Naive thymus-derived CD4-positive, alpha-beta T cell (primary cell): ENCODE measurements at regions of chr1 and their contacts with region 1.

Region 1: DNA sequence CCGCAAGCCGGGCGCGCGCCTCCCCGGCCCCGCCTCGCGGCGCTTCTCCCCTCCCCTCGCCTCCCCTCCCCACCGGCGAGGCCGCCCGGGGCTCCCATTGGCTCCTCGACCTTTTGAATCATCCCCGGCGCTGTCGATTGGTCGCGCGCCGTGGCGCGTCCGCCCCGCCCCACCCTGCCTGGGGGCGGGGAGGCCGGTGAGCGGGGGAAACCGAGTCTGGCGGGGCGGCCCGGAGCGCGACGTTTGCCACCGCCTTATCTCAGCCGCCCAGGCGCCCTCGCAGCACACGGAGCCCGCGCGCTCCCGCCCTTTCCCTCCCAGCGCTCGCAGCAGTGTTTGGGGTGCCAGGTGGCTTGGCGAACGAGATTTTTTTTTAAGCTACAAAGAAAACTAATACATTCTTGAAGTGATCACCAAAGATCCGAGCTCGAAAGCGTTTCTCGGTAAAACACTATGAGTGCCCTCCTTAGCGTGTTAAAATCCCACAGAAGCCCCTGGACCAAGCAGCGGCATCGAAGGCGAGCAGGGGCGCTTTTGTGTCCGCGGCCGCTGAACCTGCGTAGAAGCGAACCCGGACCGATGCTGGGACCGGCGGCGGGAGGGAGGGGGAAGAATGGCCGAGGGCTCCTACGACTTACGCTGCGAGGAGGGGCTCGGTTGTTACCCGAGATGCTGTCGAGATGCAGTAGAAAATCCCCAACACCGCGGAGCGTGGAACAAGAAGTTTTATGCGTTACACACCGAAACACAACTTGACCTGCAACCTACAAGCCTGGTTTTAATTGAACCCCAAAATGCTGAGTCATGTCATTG is 436 bp upstream of the LBR start:
- DNase-seq: peak; percentile 81 to 94 (median 91)
- ATAC-seq: peak; percentile 95
- H3K4me3 ChIP-seq: peak overlapping the region; percentile 71
- H3K4me3 Mint-ChIP-seq: peak overlapping the region; percentile 88 to 99 (median 91)
- H3K27ac ChIP-seq: peak overlapping the region; percentile 78
- H3K27ac Mint-ChIP-seq: peak overlapping the region; percentile 71 to 97 (median 90)
- H3K4me1 ChIP-seq: peaks cover 31% of the 10 kb centered on the region in 2 donors
- H3K4me1 Mint-ChIP-seq: peaks cover 41 to 52% (median 46%) of the 10 kb centered on the region in 7 donors
- H3K27me3 ChIP-seq: no peaks in the 10 kb centered on the region
- H3K27me3 Mint-ChIP-seq: no peaks in the 10 kb centered on the region

Region 2: DNA sequence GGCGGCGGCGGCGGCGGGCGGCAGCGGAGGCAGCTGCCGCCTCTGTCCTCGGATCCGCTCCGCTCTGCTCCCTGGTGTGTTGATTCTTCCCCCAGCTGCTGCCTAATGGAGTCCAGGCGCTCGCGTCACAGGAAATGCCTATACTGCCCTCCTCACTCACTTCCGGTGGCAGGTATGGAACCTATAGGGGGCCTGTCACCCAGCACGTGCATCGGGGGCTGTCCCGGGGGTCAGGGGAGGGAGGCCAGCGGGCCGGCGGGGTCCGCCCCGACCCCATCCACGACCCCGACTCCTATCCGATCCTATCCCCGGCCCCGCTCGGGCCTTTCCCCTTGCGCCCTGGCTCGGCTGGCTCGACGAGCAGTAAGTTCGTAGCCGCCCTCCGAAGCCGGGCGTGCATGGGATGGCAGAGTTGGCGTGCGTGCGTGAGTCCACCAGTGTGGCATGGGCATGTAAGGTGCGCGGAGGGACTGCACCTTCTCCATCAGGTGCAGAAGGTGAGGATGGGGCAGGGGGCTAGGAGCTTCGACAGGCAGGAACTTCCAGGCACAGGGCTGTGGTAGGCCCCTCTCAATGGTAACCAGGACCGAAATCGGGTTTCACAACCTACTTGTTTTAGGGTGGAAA is 993.5 kb before region 1 on chr1 and contains the start of gene WDR26:
- CTCF ChIA-PET with region 1: no interaction called
- POLR2A ChIA-PET with region 1: no interaction called
- intact Hi-C with region 1: loop called in 1 of 2 experiments (anchors 10 kb)
- DNase-seq: peak; percentile 67 to 91 (median 86)
- ATAC-seq: peak; percentile 90
- H3K4me3 ChIP-seq: peak within 1 kb of the TSS; percentile 93
- H3K4me3 Mint-ChIP-seq: peak within 1 kb of the TSS; percentile 84 to 99 (median 96)
- H3K27ac ChIP-seq: peak within 1 kb of the TSS; percentile 97
- H3K27ac Mint-ChIP-seq: peak within 1 kb of the TSS; percentile 92 to 99 (median 97)
- H3K4me1 ChIP-seq: peaks cover 27 to 30% of the 10 kb centered on the region in 2 donors
- H3K4me1 Mint-ChIP-seq: peaks cover 42 to 63% (median 59%) of the 10 kb centered on the region in 7 donors
- H3K27me3 ChIP-seq: no peaks in the 10 kb centered on the region
- H3K27me3 Mint-ChIP-seq: no peaks in the 10 kb centered on the region
- total RNA-seq, gene WDR26: 80.5 to 164 (median 104) TPM

Region 3: GRCh38 chr1:225441314-225442122 is 13.2 kb after region 1 on chr1:
- CTCF ChIA-PET with region 1: interaction called, 13 read pairs
- POLR2A ChIA-PET with region 1: interaction called, 236 read pairs
- intact Hi-C with region 1: loop called (anchors 1 kb)
- DNase-seq: peak in 3 of 9 donors; percentile 15 to 16 (median 16)
- ATAC-seq: no peak
- H3K4me3 ChIP-seq: no peak overlapping the region
- H3K4me3 Mint-ChIP-seq: peak overlapping the region; percentile 25 to 77 (median 63)
- H3K27ac ChIP-seq: peak overlapping the region; percentile 49
- H3K27ac Mint-ChIP-seq: peak overlapping the region; percentile 76 to 94 (median 91)
- H3K4me1 ChIP-seq: peaks cover 18 to 50% of the 10 kb centered on the region in 2 donors
- H3K4me1 Mint-ChIP-seq: peaks cover 47 to 70% (median 62%) of the 10 kb centered on the region in 7 donors
- H3K27me3 ChIP-seq: no peaks in the 10 kb centered on the region
- H3K27me3 Mint-ChIP-seq: peaks cover 0 to 2% (median 0%) of the 10 kb centered on the region in 5 donors

Region 4: DNA sequence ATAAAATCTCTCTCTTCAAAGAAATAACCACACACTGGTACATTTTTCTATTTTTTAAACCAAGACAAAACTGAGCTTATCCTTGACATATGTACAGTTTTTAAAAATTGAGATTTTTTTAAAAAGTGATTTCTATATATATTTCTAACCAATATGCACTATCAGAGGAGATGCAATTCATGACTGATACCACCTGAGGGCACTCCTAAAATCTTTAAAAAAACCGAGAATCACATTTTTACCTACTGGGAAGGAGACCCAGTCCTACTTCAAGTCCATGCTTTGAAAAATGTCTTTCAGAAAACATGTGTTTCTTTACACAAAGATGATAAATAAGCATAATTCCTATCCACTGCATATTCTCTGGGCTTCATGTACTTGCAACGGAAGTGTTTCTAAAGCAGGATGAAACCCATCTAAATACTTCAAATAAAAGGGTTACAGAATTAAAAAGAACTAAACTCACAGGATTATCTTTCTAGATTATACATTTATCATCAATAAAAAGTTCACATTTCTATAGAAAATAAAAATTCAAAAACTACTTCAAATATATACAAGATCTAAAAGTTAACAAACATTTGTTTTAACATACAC is 126.0 kb after region 1 on chr1:
- CTCF ChIA-PET with region 1: no interaction called
- POLR2A ChIA-PET with region 1: no interaction called
- intact Hi-C with region 1: no loop called
- DNase-seq: peak in 5 of 9 donors; percentile 25 to 34 (median 30)
- ATAC-seq: peak; percentile 54
- H3K4me3 ChIP-seq: no peak overlapping the region
- H3K4me3 Mint-ChIP-seq: no peak overlapping the region
- H3K27ac ChIP-seq: no peak overlapping the region
- H3K27ac Mint-ChIP-seq: no peak overlapping the region
- H3K4me1 ChIP-seq: no peaks in the 10 kb centered on the region
- H3K4me1 Mint-ChIP-seq: no peaks in the 10 kb centered on the region
- H3K27me3 ChIP-seq: no peaks in the 10 kb centered on the region
- H3K27me3 Mint-ChIP-seq: peaks cover 0 to 16% (median 5%) of the 10 kb centered on the region in 5 donors

Region 5: DNA sequence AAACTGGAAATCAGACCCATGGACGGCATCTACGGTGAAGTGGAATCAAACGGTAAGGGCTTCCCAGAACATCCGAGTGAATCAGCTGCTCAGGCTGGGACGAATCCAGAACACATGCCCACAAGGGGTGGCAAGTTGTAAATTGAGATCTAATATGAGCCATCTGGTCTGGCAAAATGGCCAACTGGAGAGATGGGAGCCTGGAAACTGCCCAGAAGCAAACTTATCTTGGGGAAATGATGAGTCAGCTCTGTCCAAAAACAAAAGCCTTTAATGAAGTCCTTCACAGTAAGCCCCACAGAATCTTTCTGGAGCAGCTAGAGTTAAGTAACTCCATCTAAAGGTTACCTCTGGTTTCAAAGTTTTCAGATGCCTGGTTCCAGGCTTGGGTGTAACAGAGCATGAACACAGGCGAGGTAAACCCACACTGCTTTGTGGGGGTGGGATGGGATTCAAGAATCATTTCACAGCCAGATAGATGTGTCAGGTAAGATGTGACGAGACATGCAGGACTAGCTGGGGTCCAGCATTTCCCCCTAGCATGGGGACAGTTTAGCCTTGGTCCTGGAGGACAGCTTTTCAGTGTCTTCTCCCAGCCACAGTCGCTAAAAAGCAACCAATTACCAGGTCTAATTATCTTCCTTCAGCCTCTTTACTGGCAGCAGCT is 338.8 kb after region 1 on chr1:
- CTCF ChIA-PET with region 1: no interaction called
- POLR2A ChIA-PET with region 1: no interaction called
- intact Hi-C with region 1: no loop called
- DNase-seq: no peak
- ATAC-seq: no peak
- H3K4me3 ChIP-seq: no peak overlapping the region
- H3K4me3 Mint-ChIP-seq: no peak overlapping the region
- H3K27ac ChIP-seq: no peak overlapping the region
- H3K27ac Mint-ChIP-seq: no peak overlapping the region
- H3K4me1 ChIP-seq: no peaks in the 10 kb centered on the region
- H3K4me1 Mint-ChIP-seq: peaks cover 0 to 5% (median 0%) of the 10 kb centered on the region in 7 donors
- H3K27me3 ChIP-seq: no peaks in the 10 kb centered on the region
- H3K27me3 Mint-ChIP-seq: peaks cover 0 to 8% (median 0%) of the 10 kb centered on the region in 5 donors

Region 6: DNA sequence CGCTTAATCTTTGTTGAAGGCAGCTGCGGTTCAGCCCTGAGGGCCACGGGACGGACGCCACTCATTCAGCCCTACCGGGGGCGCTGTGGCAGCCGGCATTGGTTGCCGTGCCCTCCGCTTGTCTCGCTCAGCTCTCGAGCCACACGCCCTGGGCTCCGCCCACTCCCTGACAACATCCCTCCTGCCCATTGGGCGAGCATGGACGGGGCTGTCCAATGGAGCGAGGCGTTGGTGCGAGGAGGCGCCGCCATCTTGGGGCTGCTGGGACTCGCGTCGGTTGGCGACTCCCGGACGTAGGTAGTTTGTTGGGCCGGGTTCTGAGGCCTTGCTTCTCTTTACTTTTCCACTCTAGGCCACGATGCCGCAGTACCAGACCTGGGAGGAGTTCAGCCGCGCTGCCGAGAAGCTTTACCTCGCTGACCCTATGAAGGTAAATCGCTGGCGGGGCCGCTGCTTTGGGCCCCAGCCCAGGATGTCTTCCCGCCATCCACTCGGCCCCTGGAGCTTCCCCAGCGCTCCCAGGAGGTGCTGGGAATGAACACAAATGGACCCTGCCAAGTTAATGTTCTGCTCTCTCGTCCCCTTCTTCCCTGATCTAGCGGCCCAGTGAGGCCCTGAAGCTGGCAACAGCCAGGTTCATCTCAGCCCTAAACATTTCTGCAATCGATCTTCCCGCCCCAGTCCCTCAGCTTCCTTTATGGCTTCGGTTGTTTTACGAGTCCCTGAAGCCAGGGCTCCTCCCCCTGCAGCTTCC is 349.5 kb after region 1 on chr1 and contains the start of gene SRP9:
- CTCF ChIA-PET with region 1: no interaction called
- POLR2A ChIA-PET with region 1: interaction called, 14 read pairs
- intact Hi-C with region 1: loop called (anchors 1 kb)
- DNase-seq: peak; percentile 97 to 100 (median 99)
- ATAC-seq: peak; percentile 98
- H3K4me3 ChIP-seq: peak within 1 kb of the TSS; percentile 94
- H3K4me3 Mint-ChIP-seq: no peak within 1 kb of the TSS
- H3K27ac ChIP-seq: peak within 1 kb of the TSS; percentile 97
- H3K27ac Mint-ChIP-seq: no peak within 1 kb of the TSS
- H3K4me1 ChIP-seq: peaks cover 22 to 51% of the 10 kb centered on the region in 2 donors
- H3K4me1 Mint-ChIP-seq: peaks cover 17 to 54% (median 36%) of the 10 kb centered on the region in 7 donors
- H3K27me3 ChIP-seq: no peaks in the 10 kb centered on the region
- H3K27me3 Mint-ChIP-seq: no peaks in the 10 kb centered on the region
- total RNA-seq, gene SRP9: 76.1 to 193 (median 145) TPM

Region 7: DNA sequence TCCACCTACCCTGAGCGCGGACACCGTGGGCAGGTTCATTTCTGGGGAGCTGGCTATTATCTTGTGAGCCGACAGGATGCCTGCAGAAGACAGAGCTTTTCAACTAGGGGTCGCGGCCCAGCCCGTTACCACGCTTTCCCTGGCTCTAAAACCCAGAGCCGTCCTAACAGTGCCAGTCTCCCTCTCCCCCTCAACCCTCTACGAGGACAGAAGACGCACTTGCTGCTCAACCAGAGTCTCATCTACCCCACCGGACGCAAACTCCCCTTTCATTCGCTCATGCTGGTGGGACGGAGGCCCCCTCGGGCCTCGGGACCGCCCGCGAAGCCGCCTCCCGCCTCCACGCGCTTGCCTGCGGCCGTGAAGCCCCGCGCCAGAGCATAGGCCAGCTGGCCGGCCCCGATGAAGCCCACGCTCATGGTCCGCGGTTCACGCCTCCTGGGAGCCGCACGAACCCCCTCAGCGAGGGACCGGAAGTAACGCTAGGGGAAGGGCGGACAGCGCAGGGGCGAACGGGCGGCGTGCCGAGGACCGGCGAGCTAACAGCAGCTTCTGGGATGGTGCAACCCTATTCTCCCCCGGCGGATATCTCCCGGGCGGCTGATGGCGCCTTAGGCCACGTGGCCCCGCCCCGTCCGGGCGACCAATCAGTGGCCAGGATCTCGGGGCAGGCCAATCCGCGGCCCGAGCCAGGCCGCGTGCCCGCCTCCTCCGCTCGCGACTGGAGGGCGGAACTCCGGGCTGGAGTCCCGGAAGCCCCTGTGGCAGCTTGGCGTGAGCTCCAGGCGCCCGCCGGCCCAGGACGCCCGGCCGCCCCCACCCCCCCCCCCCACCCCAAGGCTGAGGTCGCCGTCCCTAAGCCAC is 495.6 kb after region 1 on chr1 and contains the start of gene PYCR2:
- CTCF ChIA-PET with region 1: no interaction called
- POLR2A ChIA-PET with region 1: interaction called, 5 read pairs
- intact Hi-C with region 1: loop called in 1 of 2 experiments (anchors 1 kb)
- DNase-seq: peak; percentile 92 to 97 (median 94)
- ATAC-seq: peak; percentile 99
- H3K4me3 ChIP-seq: peak within 1 kb of the TSS; percentile 100
- H3K4me3 Mint-ChIP-seq: peak within 1 kb of the TSS; percentile 86 to 98 (median 94)
- H3K27ac ChIP-seq: peak within 1 kb of the TSS; percentile 95
- H3K27ac Mint-ChIP-seq: peak within 1 kb of the TSS; percentile 90 to 98 (median 95)
- H3K4me1 ChIP-seq: peaks cover 11 to 65% of the 10 kb centered on the region in 2 donors
- H3K4me1 Mint-ChIP-seq: peaks cover 45 to 75% (median 60%) of the 10 kb centered on the region in 7 donors
- H3K27me3 ChIP-seq: no peaks in the 10 kb centered on the region
- H3K27me3 Mint-ChIP-seq: no peaks in the 10 kb centered on the region
- total RNA-seq, gene PYCR2: 46.4 to 137 (median 109) TPM

Region 8: DNA sequence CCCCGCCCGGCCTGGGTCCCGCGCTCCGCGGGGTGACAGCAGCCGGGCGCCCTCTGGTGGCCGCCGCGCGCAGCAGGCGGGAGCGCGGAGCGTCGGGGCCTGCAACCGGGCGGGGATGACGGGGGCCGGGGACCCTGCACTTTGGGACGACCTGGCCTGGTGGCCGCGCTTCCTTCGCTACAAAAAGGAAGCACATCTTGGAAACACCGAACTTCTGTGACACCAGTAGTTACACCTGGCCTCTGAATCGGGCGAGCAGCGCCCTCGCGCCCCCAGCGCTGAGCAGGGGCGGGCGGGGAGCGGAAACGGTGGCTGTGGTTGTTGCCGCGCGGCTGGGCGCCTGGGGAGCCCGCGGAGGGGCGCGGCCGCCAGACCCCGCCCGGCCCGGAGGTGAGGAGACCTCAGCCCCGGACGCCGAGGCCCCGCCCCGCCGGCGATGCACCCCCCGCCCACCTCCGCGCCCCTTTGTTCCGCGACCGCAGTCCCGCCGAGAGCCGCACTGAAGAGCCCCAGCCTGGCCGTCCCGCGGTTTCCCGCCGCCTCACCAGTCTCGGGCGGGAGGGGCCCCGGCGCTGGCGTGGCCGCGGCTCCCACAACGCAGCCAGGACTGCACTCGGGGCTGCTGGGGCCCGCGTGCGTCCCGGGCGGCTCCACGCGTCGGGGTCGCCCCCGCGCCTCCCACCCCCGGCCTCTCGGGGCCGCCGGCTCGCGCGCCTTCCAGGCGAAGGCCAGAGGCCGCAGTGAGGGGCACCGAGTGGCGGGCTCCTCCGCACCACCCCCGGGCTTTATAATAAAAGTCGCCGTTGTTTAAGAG is 693.5 kb after region 1 on chr1:
- CTCF ChIA-PET with region 1: no interaction called
- POLR2A ChIA-PET with region 1: no interaction called
- intact Hi-C with region 1: loop called in 1 of 2 experiments (anchors 5 kb)
- DNase-seq: peak; percentile 65 to 87 (median 77)
- ATAC-seq: peak; percentile 82
- H3K4me3 ChIP-seq: peak overlapping the region; percentile 28
- H3K4me3 Mint-ChIP-seq: peak overlapping the region; percentile 68 to 94 (median 82)
- H3K27ac ChIP-seq: peak overlapping the region; percentile 75
- H3K27ac Mint-ChIP-seq: peak overlapping the region in 4 of 9 donors; percentile 51 to 95 (median 77)
- H3K4me1 ChIP-seq: peaks cover 9 to 12% of the 10 kb centered on the region in 2 donors
- H3K4me1 Mint-ChIP-seq: peaks cover 15 to 40% (median 27%) of the 10 kb centered on the region in 7 donors
- H3K27me3 ChIP-seq: no peaks in the 10 kb centered on the region
- H3K27me3 Mint-ChIP-seq: peaks cover 0 to 10% (median 0%) of the 10 kb centered on the region in 5 donors